CD8-positive, alpha-beta T cell (primary cell): ENCODE measurements at regions of chr1 and their contacts with region 1.

Region 1: GRCh38 chr1:169711469-169712281 is at the start of gene SELL:
- DNase-seq: peak; percentile 48 to 89 (median 78)
- ATAC-seq: peak; percentile 76
- H3K4me3 ChIP-seq: peak within 1 kb of the TSS; percentile 57 to 79
- H3K4me3 Mint-ChIP-seq: peak within 1 kb of the TSS; percentile 89
- H3K27ac ChIP-seq: peak within 1 kb of the TSS; percentile 50 to 53
- H3K27ac Mint-ChIP-seq: peak within 1 kb of the TSS; percentile 91
- H3K4me1 ChIP-seq: peaks cover 9% of the 10 kb centered on the region
- H3K4me1 Mint-ChIP-seq: peaks cover 21% of the 10 kb centered on the region
- H3K27me3 ChIP-seq: no peaks in the 10 kb centered on the region
- H3K27me3 Mint-ChIP-seq: no peaks in the 10 kb centered on the region
- CTCF ChIP-seq: peak; percentile 95
- total RNA-seq, gene SELL: 79.5 to 80.7 TPM

Region 2: GRCh38 chr1:167936068-167936929 is 1775.4 kb before region 1 on chr1 and contains the start of gene DCAF6:
- CTCF ChIA-PET with region 1: no interaction called
- POLR2A ChIA-PET with region 1: no interaction called
- intact Hi-C with region 1: loop called in 1 of 2 experiments (anchors 10 kb)
- DNase-seq: peak; percentile 93 to 100 (median 97)
- ATAC-seq: peak; percentile 78
- H3K4me3 ChIP-seq: peak within 1 kb of the TSS; percentile 85 to 86
- H3K4me3 Mint-ChIP-seq: peak within 1 kb of the TSS; percentile 89
- H3K27ac ChIP-seq: peak within 1 kb of the TSS; percentile 91 to 96
- H3K27ac Mint-ChIP-seq: peak within 1 kb of the TSS; percentile 93
- H3K4me1 ChIP-seq: peaks cover 29% of the 10 kb centered on the region
- H3K4me1 Mint-ChIP-seq: peaks cover 54% of the 10 kb centered on the region
- H3K27me3 ChIP-seq: no peaks in the 10 kb centered on the region
- H3K27me3 Mint-ChIP-seq: no peaks in the 10 kb centered on the region
- CTCF ChIP-seq: no peak
- total RNA-seq, gene DCAF6: 12.4 to 13.0 TPM

Region 3: DNA sequence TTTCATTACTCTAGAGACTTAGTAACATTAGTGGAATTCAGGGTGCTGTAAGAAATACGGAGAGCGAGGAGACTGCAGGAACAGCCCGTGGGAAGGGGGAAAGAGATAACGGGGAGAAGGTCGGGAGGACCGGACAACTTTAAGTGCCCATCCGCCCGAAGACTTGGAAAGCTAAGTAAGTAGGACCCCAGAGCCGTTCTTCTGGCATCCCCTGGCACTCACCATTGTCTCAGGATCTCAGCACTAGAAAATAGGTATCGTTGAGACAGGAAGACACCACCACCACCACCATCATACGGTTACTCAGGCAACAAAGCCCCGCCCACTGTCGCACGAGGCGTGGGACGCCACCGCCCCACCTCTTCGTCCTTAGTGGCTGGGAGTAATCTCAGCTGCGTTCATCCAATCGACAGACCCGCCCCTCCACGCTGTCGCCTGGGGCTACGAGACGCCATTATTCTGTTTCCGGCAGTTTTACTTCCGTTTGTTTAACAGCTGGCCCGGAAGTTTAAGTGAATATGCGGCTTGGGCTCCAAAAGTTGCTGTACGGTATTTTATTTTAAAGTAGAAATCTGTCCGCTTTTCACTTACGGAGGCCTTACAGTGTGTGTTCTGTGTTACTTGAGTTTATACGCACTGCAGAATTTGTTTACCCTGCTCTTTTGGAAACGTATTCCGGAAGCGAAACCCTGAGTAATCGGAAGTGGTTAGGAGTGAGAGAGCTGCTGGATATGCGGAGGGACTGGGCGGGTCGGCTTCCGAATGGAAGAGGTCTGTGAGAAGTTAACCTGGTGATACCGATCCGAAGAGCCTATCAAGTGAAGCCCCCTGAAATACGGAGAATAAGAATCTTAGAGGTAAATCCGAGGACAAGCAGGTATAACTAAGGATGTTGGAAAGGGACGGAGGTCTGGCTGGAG is 343.9 kb before region 1 on chr1 and contains the starts of genes BLZF1 and NME7:
- CTCF ChIA-PET with region 1: no interaction called
- POLR2A ChIA-PET with region 1: no interaction called
- intact Hi-C with region 1: loop called (anchors 5 kb)
- DNase-seq: peak; percentile 96 to 99 (median 98)
- ATAC-seq: peak; percentile 93
- H3K4me3 ChIP-seq: peak within 1 kb of the TSS; percentile 84 to 94
- H3K4me3 Mint-ChIP-seq: peak within 1 kb of the TSS; percentile 51
- H3K27ac ChIP-seq: peak within 1 kb of the TSS; percentile 88 to 97
- H3K27ac Mint-ChIP-seq: peak within 1 kb of the TSS; percentile 32
- H3K4me1 ChIP-seq: peaks cover 23% of the 10 kb centered on the region
- H3K4me1 Mint-ChIP-seq: peaks cover 49% of the 10 kb centered on the region
- H3K27me3 ChIP-seq: no peaks in the 10 kb centered on the region
- H3K27me3 Mint-ChIP-seq: no peaks in the 10 kb centered on the region
- CTCF ChIP-seq: no peak
- total RNA-seq, gene BLZF1: 11.1 to 13.6 TPM
- total RNA-seq, gene NME7: 5.3 to 7.7 TPM

Region 4: DNA sequence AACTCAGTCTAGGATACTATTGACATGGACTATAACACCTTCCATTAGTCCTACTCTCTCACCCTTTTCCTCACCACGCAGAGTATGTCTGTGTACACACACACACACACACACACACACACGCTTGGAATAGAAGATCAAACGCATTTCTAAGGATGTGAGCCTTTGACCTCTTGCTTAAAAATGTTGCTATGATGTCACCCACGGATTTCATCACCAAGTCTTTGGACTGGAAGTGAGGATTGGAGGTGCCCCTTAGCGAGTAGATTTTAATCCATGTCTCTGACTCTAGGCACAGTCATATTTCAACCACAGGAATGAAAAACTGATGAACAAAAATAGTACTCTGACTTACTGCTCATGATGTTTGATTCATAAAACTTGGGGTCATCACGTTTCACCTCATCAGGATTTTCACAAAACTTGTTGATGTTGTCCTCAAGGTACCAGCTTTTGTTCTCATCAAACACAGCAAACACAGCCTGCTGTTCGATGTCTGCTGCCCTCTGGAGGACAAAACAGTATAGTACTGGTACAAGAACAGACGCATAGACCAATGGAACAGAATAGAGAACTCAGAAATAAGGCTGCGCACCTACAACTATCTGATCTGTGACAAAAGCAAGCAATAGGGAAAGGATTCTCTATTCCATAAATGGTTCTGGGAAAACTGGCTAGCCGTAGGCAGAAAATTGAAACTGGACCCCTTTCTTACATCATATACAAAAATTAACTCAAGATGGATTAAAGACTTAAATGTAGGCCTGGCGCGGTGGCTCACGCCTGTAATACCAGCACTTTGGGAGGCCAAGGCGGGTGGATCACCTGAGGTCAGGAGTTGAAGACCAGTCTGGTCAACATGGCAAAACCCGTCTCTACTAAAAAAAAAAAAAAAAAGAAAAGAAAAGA is 165.3 kb before region 1 on chr1:
- CTCF ChIA-PET with region 1: interaction called, 31 read pairs
- POLR2A ChIA-PET with region 1: interaction called, 3 read pairs
- intact Hi-C with region 1: loop called (anchors 1 kb)
- DNase-seq: peak in 8 of 9 experiments; percentile 26 to 85 (median 52)
- ATAC-seq: peak; percentile 85
- H3K4me3 ChIP-seq: no peak overlapping the region
- H3K4me3 Mint-ChIP-seq: no peak overlapping the region
- H3K27ac ChIP-seq: no peak overlapping the region
- H3K27ac Mint-ChIP-seq: no peak overlapping the region
- H3K4me1 ChIP-seq: no peaks in the 10 kb centered on the region
- H3K4me1 Mint-ChIP-seq: no peaks in the 10 kb centered on the region
- H3K27me3 ChIP-seq: no peaks in the 10 kb centered on the region
- H3K27me3 Mint-ChIP-seq: no peaks in the 10 kb centered on the region
- CTCF ChIP-seq: peak; percentile 82

Region 5: GRCh38 chr1:169601093-169601881 is 110.4 kb before region 1 on chr1:
- CTCF ChIA-PET with region 1: interaction called, 149 read pairs
- POLR2A ChIA-PET with region 1: interaction called, 17 read pairs
- intact Hi-C with region 1: loop called (anchors 1 kb)
- DNase-seq: peak in 2 of 9 experiments; percentile 45 to 61
- ATAC-seq: no peak
- H3K4me3 ChIP-seq: no peak overlapping the region
- H3K4me3 Mint-ChIP-seq: no peak overlapping the region
- H3K27ac ChIP-seq: peak overlapping the region in 1 of 2 experiments; percentile 3
- H3K27ac Mint-ChIP-seq: peak overlapping the region; percentile 53
- H3K4me1 ChIP-seq: peaks cover 54% of the 10 kb centered on the region
- H3K4me1 Mint-ChIP-seq: peaks cover 54% of the 10 kb centered on the region
- H3K27me3 ChIP-seq: no peaks in the 10 kb centered on the region
- H3K27me3 Mint-ChIP-seq: no peaks in the 10 kb centered on the region
- CTCF ChIP-seq: peak; percentile 67

Region 6: DNA sequence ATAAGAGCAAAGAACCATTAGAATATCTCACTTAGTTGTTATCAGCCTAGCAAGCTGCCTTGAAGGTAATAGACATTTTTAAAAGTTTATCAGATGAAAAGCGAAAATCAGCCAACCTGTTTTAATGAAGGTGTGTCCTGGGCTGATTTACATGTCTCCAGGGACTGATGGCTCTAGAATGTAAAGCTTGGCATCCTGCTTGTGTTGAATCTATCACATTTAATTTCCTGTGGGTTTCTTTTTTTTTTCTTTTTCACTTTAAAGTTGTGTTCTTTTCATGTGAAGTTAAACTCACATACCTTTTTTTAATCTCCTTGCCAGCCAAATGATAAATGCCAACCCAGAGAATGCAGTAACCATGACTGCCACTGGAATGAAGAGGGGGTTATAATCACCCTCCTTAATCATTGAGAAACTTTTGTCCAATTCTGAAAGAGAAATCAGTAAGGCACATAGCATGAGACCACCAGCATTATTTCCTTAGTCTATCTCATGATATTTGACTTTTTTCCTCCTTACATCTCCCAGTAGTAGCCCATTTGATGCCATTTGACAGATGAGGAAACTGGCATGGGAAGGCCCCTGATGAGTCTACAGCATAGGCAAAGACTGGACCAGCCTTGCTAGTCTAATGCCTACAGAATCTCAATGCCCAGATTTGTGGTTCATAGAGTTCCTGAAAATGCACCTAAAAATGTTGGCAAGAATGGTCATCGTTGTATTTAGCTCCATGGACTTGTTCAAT is 10.2 kb before region 1 on chr1:
- CTCF ChIA-PET with region 1: interaction called, 25 read pairs
- POLR2A ChIA-PET with region 1: interaction called, 82 read pairs
- intact Hi-C with region 1: loop called in 1 of 2 experiments (anchors 1 kb)
- DNase-seq: peak in 2 of 9 experiments; percentile 27 to 67
- ATAC-seq: peak; percentile 78
- H3K4me3 ChIP-seq: peak overlapping the region in 1 of 2 experiments; percentile 1
- H3K4me3 Mint-ChIP-seq: peak overlapping the region; percentile 73
- H3K27ac ChIP-seq: peak overlapping the region; percentile 19 to 54
- H3K27ac Mint-ChIP-seq: peak overlapping the region; percentile 91
- H3K4me1 ChIP-seq: peaks cover 99% of the 10 kb centered on the region
- H3K4me1 Mint-ChIP-seq: peaks cover 96% of the 10 kb centered on the region
- H3K27me3 ChIP-seq: no peaks in the 10 kb centered on the region
- H3K27me3 Mint-ChIP-seq: no peaks in the 10 kb centered on the region
- CTCF ChIP-seq: peak; percentile 16

Region 7: GRCh38 chr1:169893494-169894362 is 182.1 kb after region 1 on chr1 and contains the start of gene SCYL3:
- CTCF ChIA-PET with region 1: interaction called, 7 read pairs
- POLR2A ChIA-PET with region 1: no interaction called
- intact Hi-C with region 1: loop called in 1 of 2 experiments (anchors 5 kb)
- DNase-seq: peak; percentile 75 to 97 (median 89)
- ATAC-seq: peak; percentile 83
- H3K4me3 ChIP-seq: peak within 1 kb of the TSS; percentile 80 to 82
- H3K4me3 Mint-ChIP-seq: peak within 1 kb of the TSS; percentile 89
- H3K27ac ChIP-seq: peak within 1 kb of the TSS; percentile 98 to 99
- H3K27ac Mint-ChIP-seq: peak within 1 kb of the TSS; percentile 99
- H3K4me1 ChIP-seq: peaks cover 35% of the 10 kb centered on the region
- H3K4me1 Mint-ChIP-seq: peaks cover 46% of the 10 kb centered on the region
- H3K27me3 ChIP-seq: no peaks in the 10 kb centered on the region
- H3K27me3 Mint-ChIP-seq: no peaks in the 10 kb centered on the region
- CTCF ChIP-seq: no peak
- total RNA-seq, gene SCYL3: 3.3 to 3.7 TPM